H1 (cell line): ENCODE measurements at regions of chr1 and their contacts with region 1.

Region 1: DNA sequence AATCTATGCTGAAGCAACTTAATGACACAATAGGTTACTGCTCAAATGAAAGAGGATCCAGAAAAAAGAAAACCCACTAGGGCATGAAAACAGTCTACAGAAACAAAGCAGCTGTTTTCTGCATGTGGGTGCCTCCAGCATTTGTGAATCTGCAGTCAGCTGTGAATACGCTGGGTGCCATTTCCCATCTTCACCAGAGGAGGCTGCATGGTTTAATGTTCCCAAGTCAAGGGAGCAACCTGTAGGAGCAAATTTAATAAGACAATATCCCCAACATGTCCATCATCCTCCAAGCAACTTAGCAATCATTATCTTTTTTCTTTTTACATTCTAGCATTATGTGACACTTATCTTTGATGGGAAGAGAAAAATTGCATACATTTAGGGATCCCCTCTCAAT is 396.6 kb downstream of the BRINP2 start:
- DNase-seq: no peak
- H3K4me3 ChIP-seq: no peak overlapping the region
- H3K27ac ChIP-seq: no peak overlapping the region
- H3K4me1 ChIP-seq: no peaks in the 10 kb centered on the region
- H3K27me3 ChIP-seq: no peaks in the 10 kb centered on the region
- CTCF ChIP-seq: peak; percentile 30 to 53 (median 47)
- EP300 ChIP-seq: no peak
- POLR2A ChIP-seq: no peak
- RAD21 ChIP-seq: peak; percentile 50 to 56

Region 2: GRCh38 chr1:177585006-177585621 is 17.7 kb after region 1 on chr1:
- CTCF ChIA-PET with region 1: interaction called, 10 read pairs
- POLR2A ChIA-PET with region 1: no interaction called
- DNase-seq: no peak
- H3K4me3 ChIP-seq: no peak overlapping the region
- H3K27ac ChIP-seq: no peak overlapping the region
- H3K4me1 ChIP-seq: no peaks in the 10 kb centered on the region
- H3K27me3 ChIP-seq: no peaks in the 10 kb centered on the region
- CTCF ChIP-seq: no peak
- EP300 ChIP-seq: no peak
- POLR2A ChIP-seq: no peak
- RAD21 ChIP-seq: no peak

Region 3: DNA sequence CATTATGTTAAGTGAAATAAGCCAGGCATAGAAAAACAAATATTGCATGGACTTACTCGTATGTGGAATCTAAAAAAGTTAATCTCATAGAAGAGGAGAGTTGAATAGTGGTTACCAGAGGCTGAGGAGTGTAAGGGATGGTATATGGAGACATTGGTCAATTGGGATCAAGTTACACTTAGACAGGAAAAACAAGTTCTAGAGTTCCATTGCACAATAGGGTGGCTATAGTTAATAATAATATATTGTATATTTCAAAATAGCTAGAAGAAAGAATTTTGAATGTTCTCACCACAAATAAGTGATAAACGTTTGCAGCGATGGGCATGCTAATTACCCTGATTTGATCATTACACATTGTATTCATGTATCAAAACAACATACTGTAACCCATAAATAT is 47.9 kb after region 1 on chr1:
- CTCF ChIA-PET with region 1: no interaction called
- POLR2A ChIA-PET with region 1: no interaction called
- DNase-seq: no peak
- H3K4me3 ChIP-seq: no peak overlapping the region
- H3K27ac ChIP-seq: no peak overlapping the region
- H3K4me1 ChIP-seq: no peaks in the 10 kb centered on the region
- H3K27me3 ChIP-seq: no peaks in the 10 kb centered on the region
- CTCF ChIP-seq: no peak
- EP300 ChIP-seq: no peak
- POLR2A ChIP-seq: no peak
- RAD21 ChIP-seq: no peak

Region 4: DNA sequence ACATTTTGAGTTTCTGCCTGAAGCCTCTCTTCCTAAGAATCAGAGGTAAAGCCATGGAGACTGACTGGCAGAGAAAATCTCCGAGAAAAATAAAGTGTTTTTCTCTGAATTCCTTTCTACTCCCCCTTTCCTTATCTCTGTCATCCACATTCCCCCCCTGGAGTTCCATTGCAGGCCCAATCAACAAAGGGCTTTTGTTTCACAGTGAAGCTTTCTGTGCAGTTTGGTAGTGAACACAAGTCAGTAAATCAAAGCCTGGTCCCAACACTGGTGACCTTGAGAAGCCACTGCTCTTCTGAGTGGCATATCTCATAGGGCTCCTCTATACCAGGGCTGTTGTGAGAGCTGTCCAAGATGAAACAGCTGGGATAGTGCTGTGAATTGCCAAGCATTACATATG is 174.1 kb after region 1 on chr1:
- CTCF ChIA-PET with region 1: no interaction called
- POLR2A ChIA-PET with region 1: no interaction called
- DNase-seq: no peak
- H3K4me3 ChIP-seq: no peak overlapping the region
- H3K27ac ChIP-seq: no peak overlapping the region
- H3K4me1 ChIP-seq: no peaks in the 10 kb centered on the region
- H3K27me3 ChIP-seq: no peaks in the 10 kb centered on the region; a peak in 1 of 7 replicates
- CTCF ChIP-seq: no peak
- EP300 ChIP-seq: no peak
- POLR2A ChIP-seq: no peak
- RAD21 ChIP-seq: no peak